IMR-90 (cell line): ENCODE measurements at regions of chr7 and their contacts with region 1.

Region 1: DNA sequence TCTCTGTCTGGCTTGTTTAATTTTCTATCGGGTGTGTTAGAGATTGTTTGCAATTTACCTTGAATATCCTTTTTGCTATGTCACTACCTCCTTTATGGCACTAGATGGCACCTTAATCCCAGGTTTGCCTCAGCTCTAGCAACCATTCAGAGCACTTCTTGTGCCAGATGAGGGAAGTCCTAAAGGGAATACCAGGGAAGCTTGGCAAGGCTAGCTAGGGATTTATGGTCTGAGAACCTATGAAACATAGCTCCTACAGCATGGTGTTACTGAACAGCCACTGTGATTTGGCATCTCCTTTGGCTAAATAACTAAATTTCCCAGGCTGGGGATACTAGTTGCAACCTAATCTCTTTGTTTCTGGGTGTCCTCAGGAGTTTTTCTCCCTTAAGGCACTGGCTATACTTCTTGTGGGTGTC is 69.0 kb upstream of the VOPP1 start:
- DNase-seq: peak; percentile 76
- ATAC-seq: peak; percentile 97
- H3K4me3 ChIP-seq: no peak overlapping the region
- H3K27ac ChIP-seq: no peak overlapping the region
- H3K4me1 ChIP-seq: no peaks in the 10 kb centered on the region
- H3K27me3 ChIP-seq: peaks cover 2% of the 10 kb centered on the region; the same call in 1 of the 2 replicates
- CTCF ChIP-seq: peak; percentile 88
- POLR2A ChIP-seq: no peak
- RAD21 ChIP-seq: peak; percentile 95

Region 2: GRCh38 chr7:55171155-55171554 is 470.1 kb before region 1 on chr7:
- CTCF ChIA-PET with region 1: no interaction called
- POLR2A ChIA-PET with region 1: no interaction called
- dilution Hi-C with region 1: no loop called
- in situ Hi-C with region 1: no loop called
- intact Hi-C with region 1: no loop called
- DNase-seq: no peak
- ATAC-seq: no peak
- H3K4me3 ChIP-seq: no peak overlapping the region
- H3K27ac ChIP-seq: no peak overlapping the region
- H3K4me1 ChIP-seq: no peaks in the 10 kb centered on the region
- H3K27me3 ChIP-seq: no peaks in the 10 kb centered on the region
- CTCF ChIP-seq: no peak
- POLR2A ChIP-seq: no peak
- RAD21 ChIP-seq: no peak

Region 3: DNA sequence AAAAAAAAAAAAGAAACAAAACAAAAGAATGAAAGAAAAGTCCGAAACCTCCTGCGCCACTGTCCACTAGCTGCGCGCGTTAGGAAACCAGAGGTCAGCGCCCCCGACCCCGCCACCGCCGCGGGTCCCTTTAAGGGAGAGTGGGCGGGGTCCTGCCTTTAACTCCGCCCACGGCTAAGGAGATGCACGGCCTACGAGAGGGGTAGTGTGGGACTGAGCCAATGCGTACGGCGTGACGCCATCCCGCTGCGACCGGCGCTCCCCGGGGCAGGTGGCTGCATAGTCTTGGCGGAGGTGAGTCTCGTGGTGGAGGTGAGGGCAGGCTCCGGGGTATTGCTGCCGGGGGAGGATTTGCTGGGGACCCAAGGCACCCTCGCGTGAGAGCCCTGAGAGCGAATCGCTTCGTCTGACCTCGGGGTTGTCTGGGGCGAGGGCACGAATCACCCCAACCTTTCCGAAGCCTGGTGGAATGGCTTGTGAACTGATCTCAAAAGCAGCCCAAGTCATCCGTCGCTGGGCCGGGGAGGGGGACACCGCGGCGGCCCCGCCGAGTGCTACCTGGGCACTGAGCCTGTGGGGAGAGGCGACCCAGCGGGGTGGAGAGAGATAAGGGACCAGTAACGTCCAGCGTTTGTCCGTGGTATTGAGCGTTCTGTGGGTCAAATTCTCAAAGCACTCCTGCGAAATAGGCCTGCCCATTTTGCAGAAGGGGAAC is 310.5 kb after region 1 on chr7 and contains the start of gene MRPS17:
- CTCF ChIA-PET with region 1: no interaction called
- POLR2A ChIA-PET with region 1: no interaction called
- dilution Hi-C with region 1: no loop called
- in situ Hi-C with region 1: loop called (anchors 10 kb)
- intact Hi-C with region 1: no loop called
- DNase-seq: peak; percentile 79
- ATAC-seq: peak; percentile 100
- H3K4me3 ChIP-seq: peak within 1 kb of the TSS; percentile 70
- H3K27ac ChIP-seq: peak within 1 kb of the TSS; percentile 10
- H3K4me1 ChIP-seq: no peaks in the 10 kb centered on the region
- H3K27me3 ChIP-seq: no peaks in the 10 kb centered on the region
- CTCF ChIP-seq: no peak
- POLR2A ChIP-seq: peak; percentile 56
- RAD21 ChIP-seq: no peak
- total RNA-seq, gene MRPS17: 15.2 and 21.1 TPM in 2 replicates

Region 4: GRCh38 chr7:55964261-55965099 is 323.2 kb after region 1 on chr7 and contains the start of gene NIPSNAP2:
- CTCF ChIA-PET with region 1: no interaction called
- POLR2A ChIA-PET with region 1: no interaction called
- dilution Hi-C with region 1: no loop called
- in situ Hi-C with region 1: loop called (anchors 10 kb)
- intact Hi-C with region 1: loop called (anchors 1 kb)
- DNase-seq: peak; percentile 35
- ATAC-seq: peak; percentile 95
- H3K4me3 ChIP-seq: peak within 1 kb of the TSS; percentile 95
- H3K27ac ChIP-seq: peak within 1 kb of the TSS; percentile 86
- H3K4me1 ChIP-seq: peaks cover 4% of the 10 kb centered on the region; the same call in 1 of the 2 replicates
- H3K27me3 ChIP-seq: no peaks in the 10 kb centered on the region
- CTCF ChIP-seq: peak; percentile 75
- POLR2A ChIP-seq: peak; percentile 76
- RAD21 ChIP-seq: peak; percentile 49
- total RNA-seq, gene NIPSNAP2: 42.8 and 53.0 TPM in 2 replicates

Region 5: GRCh38 chr7:56074371-56074791 is 433.1 kb after region 1 on chr7:
- CTCF ChIA-PET with region 1: no interaction called
- POLR2A ChIA-PET with region 1: no interaction called
- dilution Hi-C with region 1: no loop called
- in situ Hi-C with region 1: loop called (anchors 10 kb)
- intact Hi-C with region 1: loop called (anchors 1 kb)
- DNase-seq: peak; percentile 72
- ATAC-seq: peak; percentile 95
- H3K4me3 ChIP-seq: no peak overlapping the region
- H3K27ac ChIP-seq: no peak overlapping the region
- H3K4me1 ChIP-seq: peaks cover 8% of the 10 kb centered on the region; the same call in 1 of the 2 replicates
- H3K27me3 ChIP-seq: no peaks in the 10 kb centered on the region
- CTCF ChIP-seq: peak; percentile 96
- POLR2A ChIP-seq: 0 out of 2 replicates have a peak, but pooled peaks have one; percentile 31
- RAD21 ChIP-seq: peak; percentile 95

Region 6: GRCh38 chr7:56092789-56093531 is 451.7 kb after region 1 on chr7 and contains the start of gene PHKG1:
- CTCF ChIA-PET with region 1: interaction called, 5 read pairs
- POLR2A ChIA-PET with region 1: no interaction called
- dilution Hi-C with region 1: no loop called
- in situ Hi-C with region 1: no loop called
- intact Hi-C with region 1: loop called (anchors 1 kb)
- DNase-seq: peak; percentile 81
- ATAC-seq: peak; percentile 94
- H3K4me3 ChIP-seq: no peak within 1 kb of the TSS
- H3K27ac ChIP-seq: peak within 1 kb of the TSS; percentile 15; the same call in 1 of the 2 replicates
- H3K4me1 ChIP-seq: peaks cover 9% of the 10 kb centered on the region
- H3K27me3 ChIP-seq: no peaks in the 10 kb centered on the region
- CTCF ChIP-seq: peak; percentile 27
- POLR2A ChIP-seq: no peak
- RAD21 ChIP-seq: peak; percentile 38
- total RNA-seq, gene PHKG1: under 0.01 and 0.72 TPM in 2 replicates